ENCODE measurements at regions of chr7 and their contacts with region 1.

Region 1: DNA sequence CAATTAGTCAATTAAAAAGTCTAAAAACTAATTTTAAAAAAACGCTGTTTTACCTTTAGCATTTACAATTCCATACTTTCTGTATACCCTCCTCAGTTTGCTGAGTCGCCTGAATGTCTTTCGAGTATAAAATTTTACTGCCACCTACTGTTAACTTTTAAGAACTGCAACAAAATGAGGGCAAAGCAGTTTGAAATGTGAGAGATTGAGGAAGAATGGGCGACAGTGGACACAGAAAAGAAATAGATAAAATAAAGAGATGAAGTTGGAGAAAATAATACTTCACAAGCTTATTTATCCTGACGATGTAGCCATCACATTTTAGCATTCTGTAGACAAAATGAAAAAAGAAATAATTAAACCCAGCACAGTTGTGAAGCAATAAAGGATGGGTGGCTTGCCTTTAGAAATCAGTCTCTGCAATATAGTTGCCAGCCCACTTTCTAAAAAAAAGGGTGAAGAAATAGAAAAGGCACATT is 110.8 kb upstream of the PTN start:
- DNase-seq: peak; percentile 24
- ATAC-seq: peak; percentile 76
- H3K4me3 ChIP-seq: no peak overlapping the region
- H3K27ac ChIP-seq: no peak overlapping the region
- H3K4me1 ChIP-seq: no peaks in the 10 kb centered on the region
- H3K27me3 ChIP-seq: no peaks in the 10 kb centered on the region
- CTCF ChIP-seq: peak; percentile 66
- EP300 ChIP-seq: no peak
- POLR2A ChIP-seq: no peak
- RAD21 ChIP-seq: no peak

Region 2: GRCh38 chr7:136399385-136399784 is 1054.9 kb before region 1 on chr7:
- CTCF ChIA-PET with region 1: no interaction called
- POLR2A ChIA-PET with region 1: no interaction called
- in situ Hi-C with region 1: no loop called
- intact Hi-C with region 1: loop called (anchors 10 kb)
- DNase-seq: no peak
- ATAC-seq: no peak
- H3K4me3 ChIP-seq: no peak overlapping the region
- H3K27ac ChIP-seq: no peak overlapping the region
- H3K4me1 ChIP-seq: no peaks in the 10 kb centered on the region
- H3K27me3 ChIP-seq: no peaks in the 10 kb centered on the region
- CTCF ChIP-seq: no peak
- EP300 ChIP-seq: no peak
- POLR2A ChIP-seq: no peak
- RAD21 ChIP-seq: no peak

Region 3: GRCh38 chr7:137169282-137169698 is 285.0 kb before region 1 on chr7:
- CTCF ChIA-PET with region 1: interaction called, 6 read pairs
- POLR2A ChIA-PET with region 1: no interaction called
- in situ Hi-C with region 1: loop called (anchors 10 kb)
- intact Hi-C with region 1: loop called (anchors 1 kb)
- DNase-seq: peak; percentile 26
- ATAC-seq: peak; percentile 93
- H3K4me3 ChIP-seq: no peak overlapping the region
- H3K27ac ChIP-seq: no peak overlapping the region
- H3K4me1 ChIP-seq: no peaks in the 10 kb centered on the region
- H3K27me3 ChIP-seq: 0 out of 5 replicates have a peak, but pooled peaks cover 0 to 4% of the 10 kb centered on the region in 2 experiments
- CTCF ChIP-seq: peak; percentile 81
- EP300 ChIP-seq: no peak
- POLR2A ChIP-seq: no peak
- RAD21 ChIP-seq: peak; percentile 45; the same call in 1 of the 2 replicates

Region 4: DNA sequence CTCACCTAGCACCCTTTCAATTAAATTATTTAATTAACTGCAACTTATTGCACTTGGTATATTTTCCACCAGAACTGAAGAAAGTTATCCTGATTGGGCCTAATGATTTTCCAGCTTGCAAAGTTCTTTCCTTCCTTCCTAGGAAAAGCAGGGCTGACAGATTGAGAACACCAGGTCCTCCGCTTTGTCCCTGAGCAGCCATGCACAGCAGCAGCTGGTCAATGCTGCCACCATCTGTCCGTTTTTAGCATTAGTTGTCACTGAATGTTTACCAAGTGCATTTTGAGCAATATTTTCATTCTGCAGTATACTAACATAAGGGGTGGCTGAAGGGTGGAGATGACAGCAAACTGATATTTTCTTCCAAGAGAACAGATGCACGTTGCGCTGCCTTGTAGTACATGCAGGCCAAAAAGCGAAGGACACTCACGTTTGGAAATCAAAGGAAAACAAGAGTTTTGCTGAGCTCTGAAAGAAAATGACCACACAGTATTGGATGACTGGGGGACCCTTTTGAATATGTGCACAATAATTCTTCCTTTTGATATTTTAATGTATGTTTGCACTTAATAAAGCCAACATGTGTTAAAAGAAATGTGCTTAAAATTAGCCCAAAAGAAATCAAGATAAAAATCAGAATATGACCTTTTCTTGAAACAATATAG is 138.1 kb after region 1 on chr7:
- CTCF ChIA-PET with region 1: no interaction called
- POLR2A ChIA-PET with region 1: no interaction called
- in situ Hi-C with region 1: no loop called
- intact Hi-C with region 1: loop called (anchors 1 kb)
- DNase-seq: peak; percentile 46
- ATAC-seq: peak; percentile 98
- H3K4me3 ChIP-seq: no peak overlapping the region
- H3K27ac ChIP-seq: no peak overlapping the region
- H3K4me1 ChIP-seq: no peaks in the 10 kb centered on the region; the same call in 1 of the 2 replicates
- H3K27me3 ChIP-seq: peaks cover 0 to 6% of the 10 kb centered on the region in 2 experiments; a peak in 2 of 5 replicates
- CTCF ChIP-seq: peak; percentile 89
- EP300 ChIP-seq: no peak
- POLR2A ChIP-seq: no peak
- RAD21 ChIP-seq: peak; percentile 66